Natural killer cell (primary cell): ENCODE measurements at regions of chr6 and their contacts with region 1.

Region 1: DNA sequence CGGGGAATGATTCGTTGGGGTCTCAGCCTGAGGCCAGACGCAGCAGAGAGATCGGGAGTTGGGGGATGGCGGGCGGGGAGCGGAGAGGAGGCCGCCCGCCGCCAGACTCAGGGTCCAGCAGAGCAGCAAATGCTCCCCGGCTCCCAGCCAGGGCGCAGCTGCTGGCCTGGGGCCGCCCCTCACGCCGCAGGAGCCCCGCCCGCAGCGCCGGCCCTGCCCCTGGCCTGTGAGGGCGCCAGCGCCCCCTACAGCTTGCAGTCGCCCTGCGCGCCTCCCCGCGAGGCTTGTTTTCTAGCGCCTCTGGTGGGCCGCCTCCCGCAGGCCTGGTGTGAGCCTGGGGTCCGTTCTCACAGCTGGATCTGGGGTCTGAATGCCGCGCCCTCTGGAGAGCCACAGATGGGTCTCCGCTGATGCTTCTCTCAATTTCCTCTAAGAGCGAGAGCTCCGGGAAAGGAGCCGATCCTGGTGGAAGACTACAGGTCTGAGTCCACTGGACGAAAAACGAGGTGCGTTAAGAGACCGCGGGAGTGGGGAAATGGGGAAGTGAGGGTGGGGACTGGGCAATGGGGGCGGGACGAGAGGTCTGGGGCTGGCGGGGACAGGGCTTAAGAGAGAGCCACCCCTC is 29.9 kb downstream of the TRIM38 start:
- DNase-seq: peak; percentile 95 to 97
- ATAC-seq: peak; percentile 96 to 99 (median 96)
- H3K4me3 ChIP-seq: peak overlapping the region; percentile 82
- H3K4me3 Mint-ChIP-seq: peak overlapping the region; percentile 97
- H3K27ac ChIP-seq: peak overlapping the region; percentile 85
- H3K27ac Mint-ChIP-seq: peak overlapping the region; percentile 93 to 96
- H3K4me1 ChIP-seq: peaks cover 14% of the 10 kb centered on the region
- H3K4me1 Mint-ChIP-seq: peaks cover 23 to 26% of the 10 kb centered on the region in 2 donors
- H3K27me3 ChIP-seq: no peaks in the 10 kb centered on the region
- H3K27me3 Mint-ChIP-seq: no peaks in the 10 kb centered on the region
- CTCF ChIP-seq: peak; percentile 99

Region 2: GRCh38 chr6:25962149-25963127 is 30.1 kb before region 1 on chr6 and contains the start of gene TRIM38:
- intact Hi-C with region 1: loop called (anchors 2 kb)
- DNase-seq: peak; percentile 48 to 93
- ATAC-seq: peak; percentile 94 to 95 (median 94)
- H3K4me3 ChIP-seq: peak within 1 kb of the TSS; percentile 88
- H3K4me3 Mint-ChIP-seq: peak within 1 kb of the TSS; percentile 98
- H3K27ac ChIP-seq: peak within 1 kb of the TSS; percentile 97
- H3K27ac Mint-ChIP-seq: peak within 1 kb of the TSS; percentile 96 to 99
- H3K4me1 ChIP-seq: peaks cover 52% of the 10 kb centered on the region
- H3K4me1 Mint-ChIP-seq: peaks cover 68 to 71% of the 10 kb centered on the region in 2 donors
- H3K27me3 ChIP-seq: no peaks in the 10 kb centered on the region
- H3K27me3 Mint-ChIP-seq: no peaks in the 10 kb centered on the region
- CTCF ChIP-seq: no peak
- total RNA-seq, gene TRIM38: 25.5 to 30.5 (median 27.1) TPM

Region 3: DNA sequence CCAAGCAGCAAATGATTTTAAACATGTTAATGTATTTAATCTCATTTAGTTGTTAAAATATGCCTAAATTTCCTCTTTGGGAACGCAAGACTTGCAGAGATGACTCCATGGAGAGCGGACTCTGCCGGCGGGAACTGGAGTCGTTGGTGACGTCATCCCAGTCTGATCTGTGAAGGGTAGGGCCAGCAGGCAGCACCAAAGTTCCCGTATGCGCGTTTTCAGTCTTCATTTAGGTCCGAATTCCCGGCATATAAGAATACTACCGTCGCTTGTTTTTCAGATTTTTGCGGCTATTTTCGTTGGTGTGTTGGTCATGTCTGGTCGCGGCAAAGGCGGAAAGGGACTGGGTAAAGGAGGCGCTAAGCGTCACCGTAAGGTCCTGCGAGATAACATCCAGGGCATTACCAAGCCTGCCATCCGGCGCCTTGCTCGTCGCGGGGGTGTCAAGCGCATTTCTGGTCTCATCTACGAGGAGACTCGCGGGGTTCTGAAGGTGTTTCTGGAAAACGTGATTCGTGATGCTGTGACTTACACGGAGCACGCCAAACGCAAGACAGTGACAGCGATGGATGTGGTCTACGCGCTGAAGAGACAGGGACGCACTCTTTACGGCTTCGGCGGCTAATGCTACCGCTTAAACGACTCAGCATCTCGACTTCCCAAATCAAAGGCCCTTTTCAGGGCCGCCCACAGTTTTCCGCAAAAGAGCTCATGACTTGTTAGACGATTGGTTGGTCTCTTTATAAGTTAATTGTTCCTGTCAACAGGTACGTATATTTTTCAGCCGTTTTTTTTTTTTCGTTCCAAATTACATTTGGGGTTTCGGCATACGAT is 212.0 kb after region 1 on chr6:
- intact Hi-C with region 1: no loop called
- DNase-seq: peak; percentile 78 to 97
- ATAC-seq: peak; percentile 63 to 81 (median 69)
- H3K4me3 ChIP-seq: peak overlapping the region; percentile 81
- H3K4me3 Mint-ChIP-seq: no peak overlapping the region
- H3K27ac ChIP-seq: peak overlapping the region; percentile 96
- H3K27ac Mint-ChIP-seq: no peak overlapping the region
- H3K4me1 ChIP-seq: peaks cover 25% of the 10 kb centered on the region
- H3K4me1 Mint-ChIP-seq: peaks cover 13 to 19% of the 10 kb centered on the region in 2 donors
- H3K27me3 ChIP-seq: no peaks in the 10 kb centered on the region
- H3K27me3 Mint-ChIP-seq: no peaks in the 10 kb centered on the region
- CTCF ChIP-seq: peak; percentile 23